ENCODE measurements at regions of chr12 and their contacts with region 1.

Region 1: GRCh38 chr12:40921563-40922163 is 229.4 kb downstream of the CNTN1 start:
- DNase-seq: peak; percentile 30

Region 2: GRCh38 chr12:40105265-40105514 is 816.5 kb before region 1 on chr12:
- in situ Hi-C with region 1: no loop called
- DNase-seq: no peak

Region 3: GRCh38 chr12:40647651-40648050 is 274.0 kb before region 1 on chr12:
- in situ Hi-C with region 1: loop called (anchors 25 kb)
- DNase-seq: no peak

Region 4: GRCh38 chr12:40784102-40784501 is 137.6 kb before region 1 on chr12:
- in situ Hi-C with region 1: no loop called
- DNase-seq: no peak